Activated T-helper 1 cell treated with anti-CD3 and anti-CD28 coated beads, Interleukin-12 subunit alpha, Interleukin-12 subunit beta, Interleukin-2, Interleukin-4 antibody, amounts not matched to agents 30 ng/mL and 10 ng/mL and 1 ng/mL, durations not matched to agents 14 hours and 24 hours and 36 hours (primary cell): ENCODE measurements at regions of chr6 and their contacts with region 1.

Region 1: DNA sequence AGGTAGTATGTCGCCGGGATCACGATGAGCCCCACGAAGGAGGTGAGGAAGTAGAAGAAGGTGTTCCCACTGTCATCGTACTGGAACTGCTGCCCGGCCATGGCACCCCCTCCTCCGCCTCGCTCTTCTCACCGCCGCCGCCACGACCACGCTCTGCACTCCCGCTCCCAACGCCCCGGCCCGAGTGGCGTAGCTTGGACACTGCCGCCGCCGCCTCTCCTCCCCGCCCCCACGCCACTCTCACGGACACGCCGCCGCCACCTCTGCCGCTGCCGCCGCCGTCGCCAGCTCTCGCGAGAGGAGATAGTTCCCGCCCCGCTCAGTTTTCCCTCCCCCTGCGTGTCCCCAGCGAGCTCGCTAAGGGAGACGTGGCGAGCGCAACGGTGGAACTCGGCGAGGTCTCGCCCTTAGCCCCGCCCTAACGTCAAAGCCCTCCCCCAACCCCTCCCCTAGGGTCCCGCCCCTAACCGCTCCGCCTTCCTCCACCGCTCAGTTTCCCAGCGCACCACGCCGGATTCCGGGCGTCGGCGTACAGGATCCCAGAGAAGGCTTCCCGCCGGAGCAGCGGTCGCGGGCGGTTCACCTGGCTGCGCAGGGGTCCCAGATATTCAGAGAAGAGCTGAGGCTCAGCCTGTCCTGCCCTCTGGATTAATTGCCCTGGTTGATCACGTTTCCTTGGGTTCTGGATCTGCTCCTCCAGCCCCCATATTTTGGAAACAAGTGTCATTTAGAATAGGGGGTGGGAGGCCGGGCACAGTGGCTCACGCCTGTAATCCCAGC is at the start of gene SEC63:
- DNase-seq: peak; percentile 97
- H3K4me3 Mint-ChIP-seq: peak within 1 kb of the TSS; percentile 100
- H3K27ac Mint-ChIP-seq: peak within 1 kb of the TSS; percentile 99
- H3K4me1 Mint-ChIP-seq: peaks cover 14% of the 10 kb centered on the region
- H3K27me3 Mint-ChIP-seq: peaks cover 5% of the 10 kb centered on the region
- total RNA-seq, gene SEC63: 87.1 and 90.7 TPM in 2 replicates

Region 2: GRCh38 chr6:107114213-107114905 is 843.7 kb before region 1 on chr6:
- intact Hi-C with region 1: loop called (anchors 5 kb)
- DNase-seq: peak; percentile 70
- H3K4me3 Mint-ChIP-seq: peak overlapping the region; percentile 82
- H3K27ac Mint-ChIP-seq: peak overlapping the region; percentile 77
- H3K4me1 Mint-ChIP-seq: peaks cover 26% of the 10 kb centered on the region
- H3K27me3 Mint-ChIP-seq: peaks cover 18% of the 10 kb centered on the region

Region 3: GRCh38 chr6:107473660-107474059 is 484.4 kb before region 1 on chr6:
- intact Hi-C with region 1: no loop called
- DNase-seq: no peak
- H3K4me3 Mint-ChIP-seq: no peak overlapping the region
- H3K27ac Mint-ChIP-seq: no peak overlapping the region
- H3K4me1 Mint-ChIP-seq: no peaks in the 10 kb centered on the region
- H3K27me3 Mint-ChIP-seq: peaks cover 19% of the 10 kb centered on the region

Region 4: GRCh38 chr6:107716688-107717089 is 241.4 kb before region 1 on chr6:
- intact Hi-C with region 1: loop called (anchors 2 kb)
- DNase-seq: peak; percentile 70
- H3K4me3 Mint-ChIP-seq: peak overlapping the region; percentile 69
- H3K27ac Mint-ChIP-seq: peak overlapping the region; percentile 89
- H3K4me1 Mint-ChIP-seq: peaks cover 55% of the 10 kb centered on the region
- H3K27me3 Mint-ChIP-seq: peaks cover 3% of the 10 kb centered on the region

Region 5: DNA sequence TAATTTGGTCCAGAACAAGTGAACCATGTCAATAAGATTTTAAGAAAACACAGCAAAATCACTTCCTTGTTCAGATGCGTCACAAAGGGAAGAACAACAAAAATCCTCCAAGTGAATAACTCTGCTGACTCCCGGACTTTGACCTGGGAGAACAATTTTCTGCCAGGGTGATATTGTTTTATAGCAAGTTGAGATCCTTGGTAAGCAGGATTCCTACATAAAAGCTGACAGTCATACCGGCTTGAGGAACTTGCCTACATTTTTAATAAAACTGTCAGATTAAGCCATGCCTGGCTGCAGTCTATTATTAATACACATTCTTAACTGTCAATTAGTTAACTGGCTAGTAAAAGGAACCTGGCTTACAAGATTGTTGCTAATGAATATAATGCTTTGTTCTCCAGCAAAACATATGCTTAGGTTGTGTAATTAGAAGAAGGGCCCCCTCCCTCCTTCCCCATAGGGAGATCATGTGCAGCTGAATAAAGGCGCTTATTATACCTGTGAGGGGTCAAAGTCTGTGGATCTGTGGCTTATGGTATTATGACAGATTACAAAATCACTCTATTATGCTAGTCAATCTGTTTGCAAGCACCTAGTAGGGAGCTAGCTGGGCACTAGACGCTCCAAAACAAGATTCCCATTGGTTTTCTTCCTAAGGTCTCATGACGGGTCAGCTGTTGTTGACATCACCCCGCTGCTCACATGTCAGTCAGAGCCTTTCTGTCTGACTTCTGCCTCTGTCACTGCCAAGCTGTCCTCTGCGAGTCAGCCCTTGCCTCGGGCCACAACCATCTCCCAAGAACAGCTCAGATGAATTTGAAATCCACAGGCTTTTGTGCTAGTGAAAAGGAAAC is 44.5 kb after region 1 on chr6:
- intact Hi-C with region 1: no loop called
- DNase-seq: no peak
- H3K4me3 Mint-ChIP-seq: no peak overlapping the region
- H3K27ac Mint-ChIP-seq: no peak overlapping the region
- H3K4me1 Mint-ChIP-seq: no peaks in the 10 kb centered on the region
- H3K27me3 Mint-ChIP-seq: peaks cover 8% of the 10 kb centered on the region

Region 6: DNA sequence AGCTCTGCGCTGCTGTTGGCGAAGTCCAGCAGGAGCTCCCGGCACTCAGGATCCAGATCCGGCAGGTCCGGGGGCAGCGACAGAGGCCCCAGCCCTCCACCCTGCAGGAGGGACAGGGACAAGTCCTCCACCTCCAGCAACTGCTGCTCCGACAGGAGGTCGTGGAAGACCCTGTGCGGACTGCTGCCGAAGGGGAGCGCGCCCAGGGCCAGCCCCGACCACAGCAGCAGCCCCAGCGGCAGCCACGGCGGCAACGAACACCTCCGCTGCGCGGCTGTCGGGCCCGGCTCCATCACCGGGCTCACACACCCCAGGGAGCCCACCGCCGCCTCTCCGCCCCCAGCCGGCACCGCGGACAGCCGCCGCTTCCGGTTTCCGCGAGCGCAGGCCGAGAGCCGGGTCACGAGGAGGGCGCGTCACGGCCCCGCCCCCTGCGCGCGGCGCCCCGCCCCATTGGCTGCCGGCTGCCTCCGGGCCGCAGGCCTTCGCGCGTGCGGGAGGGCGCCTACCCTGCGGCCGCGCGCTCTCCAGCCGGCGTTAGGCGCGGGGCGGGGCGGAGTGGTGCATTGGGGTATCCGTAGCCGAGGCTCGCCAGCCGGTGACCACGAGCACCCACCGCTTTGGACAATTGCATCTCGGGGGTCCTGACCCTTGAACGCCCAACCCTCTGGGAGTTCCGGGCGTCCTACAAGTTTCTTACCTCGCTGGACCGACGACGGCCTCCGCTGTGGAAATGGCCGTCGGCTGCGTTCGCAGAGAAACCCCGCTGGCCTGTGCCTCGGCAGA is 116.5 kb after region 1 on chr6 and contains the start of gene OSTM1:
- intact Hi-C with region 1: loop called (anchors 1 kb)
- DNase-seq: peak; percentile 92
- H3K4me3 Mint-ChIP-seq: peak within 1 kb of the TSS; percentile 85
- H3K27ac Mint-ChIP-seq: peak within 1 kb of the TSS; percentile 80
- H3K4me1 Mint-ChIP-seq: peaks cover 12% of the 10 kb centered on the region
- H3K27me3 Mint-ChIP-seq: peaks cover 25% of the 10 kb centered on the region
- total RNA-seq, gene OSTM1: 19.9 and 22.5 TPM in 2 replicates

Region 7: DNA sequence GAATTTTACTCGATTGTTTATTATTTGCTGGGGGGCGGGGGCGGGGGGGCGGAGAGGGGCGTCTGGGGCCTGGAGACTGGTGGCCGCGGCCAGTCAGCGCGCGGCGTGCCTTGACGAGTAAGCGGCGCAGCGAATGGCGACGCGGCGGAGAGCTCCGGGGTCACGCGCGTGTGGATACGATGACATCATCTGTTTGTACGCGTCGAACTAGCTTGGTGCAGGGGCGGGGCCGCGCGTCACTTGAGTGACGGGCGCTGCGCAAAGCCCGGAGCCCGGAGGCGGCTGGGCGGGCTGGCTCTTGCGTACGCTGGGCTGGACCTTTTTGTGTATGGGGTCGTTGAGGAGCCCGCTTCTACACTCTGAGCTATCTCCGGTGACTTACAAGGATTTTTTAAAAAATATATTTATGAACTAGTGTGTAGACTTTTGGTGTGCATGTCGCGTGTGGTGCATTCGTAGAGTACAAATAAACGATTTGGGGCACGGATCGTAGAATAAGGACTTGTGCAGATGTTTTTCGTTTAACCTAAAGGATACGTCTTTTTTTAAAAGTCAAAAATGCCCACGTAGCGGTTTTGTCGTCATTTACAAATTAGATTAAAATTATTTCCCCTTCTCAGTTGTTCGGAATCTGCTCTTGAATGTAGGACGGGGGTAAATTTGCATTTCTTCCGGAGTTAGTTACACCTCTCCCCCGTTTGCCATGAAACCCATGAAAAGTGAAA is 600.4 kb after region 1 on chr6:
- intact Hi-C with region 1: loop called (anchors 1 kb)
- DNase-seq: peak; percentile 95
- H3K4me3 Mint-ChIP-seq: peak overlapping the region; percentile 88
- H3K27ac Mint-ChIP-seq: peak overlapping the region; percentile 91
- H3K4me1 Mint-ChIP-seq: peaks cover 32% of the 10 kb centered on the region
- H3K27me3 Mint-ChIP-seq: peaks cover 47% of the 10 kb centered on the region

Region 8: GRCh38 chr6:109059571-109060021 is 1101.5 kb after region 1 on chr6:
- intact Hi-C with region 1: no loop called
- DNase-seq: no peak
- H3K4me3 Mint-ChIP-seq: no peak overlapping the region
- H3K27ac Mint-ChIP-seq: peak overlapping the region; percentile 72
- H3K4me1 Mint-ChIP-seq: peaks cover 13% of the 10 kb centered on the region
- H3K27me3 Mint-ChIP-seq: peaks cover 9% of the 10 kb centered on the region